Posterior cingulate gyrus (tissue), 11 donors: ENCODE measurements at regions of chr1 and their contacts with region 1.

Region 1: GRCh38 chr1:154961497-154962262 is at the start of gene PYGO2:
- DNase-seq: peak; percentile 62 to 96 (median 78)

Region 2: DNA sequence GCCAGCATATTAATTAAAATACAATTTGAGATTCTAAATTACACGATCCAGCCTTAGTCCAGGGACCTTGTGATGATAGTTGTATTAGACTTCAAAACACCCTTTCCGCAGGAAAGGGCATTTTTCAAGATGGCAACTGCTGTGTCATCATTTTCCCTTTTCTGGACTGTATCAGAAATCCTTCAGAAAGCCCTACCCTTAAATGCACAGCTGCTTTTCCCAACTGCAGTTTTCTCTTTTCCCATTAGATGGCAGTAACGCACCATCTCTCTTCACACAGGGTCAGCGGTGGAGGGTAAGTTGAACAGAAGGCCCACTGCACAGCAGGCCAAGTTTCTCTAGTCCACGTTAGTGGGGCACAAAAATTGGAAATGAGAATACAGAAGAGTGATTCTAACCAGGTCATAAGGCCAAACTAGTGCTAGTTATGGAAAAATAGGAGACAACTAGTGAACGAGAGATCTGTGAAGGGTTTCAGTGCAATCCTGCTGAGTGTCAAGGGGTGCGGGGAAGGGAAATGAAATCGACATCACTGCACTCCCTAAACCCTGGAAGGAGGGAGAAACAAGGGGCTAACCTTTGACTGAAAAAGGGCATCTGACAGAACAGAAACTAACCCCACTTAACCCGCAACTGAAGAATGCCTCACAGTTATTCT is 481.8 kb before region 1 on chr1:
- intact Hi-C with region 1: no loop called
- DNase-seq: peak in 5 of 10 donors; percentile 61 to 84 (median 62)

Region 3: GRCh38 chr1:154998818-154999570 is 37.3 kb after region 1 on chr1:
- intact Hi-C with region 1: loop called (anchors 5 kb)
- DNase-seq: peak; percentile 15 to 93 (median 69)

Region 4: DNA sequence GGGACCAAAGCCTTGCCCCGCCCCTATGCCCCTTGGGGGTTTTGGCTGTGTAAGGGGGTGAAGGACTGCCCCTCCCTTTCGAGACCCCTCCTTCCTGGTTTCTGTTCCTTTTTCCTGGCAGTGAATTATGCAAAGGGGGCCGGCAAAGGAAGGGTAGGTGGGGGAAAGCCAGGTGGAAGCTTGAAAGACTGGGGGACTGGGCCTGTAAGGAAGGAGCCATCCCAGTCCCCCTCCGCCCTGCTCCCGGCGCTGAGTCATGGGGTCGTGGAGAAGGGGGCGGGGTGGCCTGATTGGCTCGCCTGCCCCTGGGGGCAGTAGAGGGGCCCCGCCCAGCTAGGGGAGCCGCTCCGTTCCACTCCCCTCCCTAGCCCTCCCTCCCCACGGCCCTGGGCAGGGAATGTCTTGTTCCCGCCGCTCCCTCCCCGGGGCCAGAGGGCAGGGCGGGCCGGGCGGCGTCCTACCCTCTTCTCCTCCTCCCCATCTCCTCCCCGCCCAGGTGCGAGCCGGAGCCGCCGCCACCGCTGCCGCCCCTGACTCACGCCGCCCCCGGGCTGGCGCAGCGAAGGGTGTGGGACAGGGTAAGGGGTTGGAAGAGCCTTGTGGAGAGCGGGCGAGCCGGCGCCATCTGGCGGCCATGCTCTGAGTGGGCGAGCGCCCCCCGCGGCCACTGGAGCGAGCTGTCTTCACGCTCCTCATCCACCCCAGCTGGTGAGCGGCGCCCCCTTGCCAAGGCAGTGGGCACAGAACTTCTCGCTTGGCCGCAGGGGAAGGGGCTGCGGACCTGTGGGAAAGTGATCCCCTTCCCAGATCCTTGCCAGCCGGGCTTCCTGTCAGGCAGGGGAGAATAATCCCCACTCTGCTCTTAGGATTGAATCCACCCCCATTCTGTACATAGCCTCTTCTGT is 55.6 kb after region 1 on chr1:
- intact Hi-C with region 1: loop called (anchors 5 kb)
- DNase-seq: peak; percentile 75 to 98 (median 88)

Region 5: DNA sequence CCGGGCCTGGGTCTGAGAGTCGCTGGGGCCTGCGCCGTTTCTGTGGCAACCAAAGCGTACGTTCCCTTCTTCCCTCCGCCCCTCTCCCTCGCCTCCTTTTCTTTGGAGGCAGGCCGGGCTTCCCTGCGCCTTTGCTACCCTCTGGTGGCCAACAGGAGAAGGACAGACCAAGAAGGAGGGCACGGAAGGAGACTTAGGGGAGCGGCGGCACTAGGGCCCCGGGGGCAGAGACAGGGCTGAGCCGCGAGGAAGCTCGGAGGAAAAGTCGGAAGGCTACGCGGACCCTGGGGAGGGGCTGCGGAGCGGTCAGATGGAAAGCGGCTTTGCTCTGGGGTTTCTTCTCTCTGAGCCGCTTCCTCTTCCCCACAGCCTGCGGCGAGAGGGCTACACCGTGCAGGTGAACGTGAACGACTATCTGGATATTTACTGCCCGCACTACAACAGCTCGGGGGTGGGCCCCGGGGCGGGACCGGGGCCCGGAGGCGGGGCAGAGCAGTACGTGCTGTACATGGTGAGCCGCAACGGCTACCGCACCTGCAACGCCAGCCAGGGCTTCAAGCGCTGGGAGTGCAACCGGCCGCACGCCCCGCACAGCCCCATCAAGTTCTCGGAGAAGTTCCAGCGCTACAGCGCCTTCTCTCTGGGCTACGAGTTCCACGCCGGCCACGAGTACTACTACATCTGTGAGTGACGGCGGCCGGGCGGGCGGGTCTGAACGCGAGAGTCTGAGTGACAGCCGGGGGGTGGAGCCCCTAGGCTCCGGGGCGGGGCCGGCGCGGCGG is 123.2 kb after region 1 on chr1:
- intact Hi-C with region 1: loop called (anchors 5 kb)
- DNase-seq: peak; percentile 87 to 99 (median 92)